Activated B cell treated with CpG ODN at 0.5 μM for 24 hours (primary cell): ENCODE measurements at regions of chr14 and their contacts with region 1.

Region 1: DNA sequence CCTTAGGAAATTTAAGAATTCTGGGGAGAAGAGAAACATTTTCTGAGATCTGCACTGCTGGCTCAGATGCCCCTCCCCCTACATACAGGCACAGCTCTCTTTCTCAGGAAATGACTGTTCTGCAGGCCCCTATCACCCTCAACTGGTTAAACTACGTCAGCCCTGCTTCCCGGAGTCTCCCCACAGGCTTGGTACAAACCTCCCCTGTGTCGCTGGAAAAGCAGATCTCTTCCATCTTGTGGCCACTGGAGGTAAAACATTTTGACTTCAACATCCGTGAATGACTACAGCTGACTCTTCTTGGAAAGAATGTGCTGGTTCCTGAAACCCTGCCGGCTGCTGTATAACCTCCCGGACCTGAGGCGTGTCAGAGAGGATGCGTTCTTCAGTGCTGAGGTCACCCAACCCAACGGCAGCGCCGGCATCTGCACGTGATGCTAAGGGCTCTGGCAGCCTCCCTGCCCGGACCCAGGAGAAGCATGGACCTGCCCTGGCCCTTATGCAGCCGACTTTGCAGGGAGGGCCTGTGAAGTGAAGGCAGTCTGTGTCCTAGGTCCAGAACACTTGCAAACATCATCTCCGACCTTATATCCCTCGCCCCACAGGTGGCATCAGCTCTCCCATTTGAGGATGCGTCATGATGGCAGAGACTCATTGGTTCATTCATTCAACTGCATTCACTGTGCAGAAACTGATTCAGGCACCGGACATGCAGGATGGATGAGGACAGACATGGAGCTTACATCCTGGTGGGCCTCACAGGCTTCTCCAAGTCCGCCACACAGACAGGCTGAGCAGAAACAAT is 129.3 kb downstream of the GCH1 start:
- DNase-seq: no peak
- ATAC-seq: peak; percentile 32
- H3K4me3 Mint-ChIP-seq: peak overlapping the region; percentile 32
- H3K27ac Mint-ChIP-seq: peak overlapping the region; percentile 62
- H3K4me1 Mint-ChIP-seq: peaks cover 50% of the 10 kb centered on the region
- H3K27me3 Mint-ChIP-seq: no peaks in the 10 kb centered on the region
- CTCF ChIP-seq: no peak

Region 2: DNA sequence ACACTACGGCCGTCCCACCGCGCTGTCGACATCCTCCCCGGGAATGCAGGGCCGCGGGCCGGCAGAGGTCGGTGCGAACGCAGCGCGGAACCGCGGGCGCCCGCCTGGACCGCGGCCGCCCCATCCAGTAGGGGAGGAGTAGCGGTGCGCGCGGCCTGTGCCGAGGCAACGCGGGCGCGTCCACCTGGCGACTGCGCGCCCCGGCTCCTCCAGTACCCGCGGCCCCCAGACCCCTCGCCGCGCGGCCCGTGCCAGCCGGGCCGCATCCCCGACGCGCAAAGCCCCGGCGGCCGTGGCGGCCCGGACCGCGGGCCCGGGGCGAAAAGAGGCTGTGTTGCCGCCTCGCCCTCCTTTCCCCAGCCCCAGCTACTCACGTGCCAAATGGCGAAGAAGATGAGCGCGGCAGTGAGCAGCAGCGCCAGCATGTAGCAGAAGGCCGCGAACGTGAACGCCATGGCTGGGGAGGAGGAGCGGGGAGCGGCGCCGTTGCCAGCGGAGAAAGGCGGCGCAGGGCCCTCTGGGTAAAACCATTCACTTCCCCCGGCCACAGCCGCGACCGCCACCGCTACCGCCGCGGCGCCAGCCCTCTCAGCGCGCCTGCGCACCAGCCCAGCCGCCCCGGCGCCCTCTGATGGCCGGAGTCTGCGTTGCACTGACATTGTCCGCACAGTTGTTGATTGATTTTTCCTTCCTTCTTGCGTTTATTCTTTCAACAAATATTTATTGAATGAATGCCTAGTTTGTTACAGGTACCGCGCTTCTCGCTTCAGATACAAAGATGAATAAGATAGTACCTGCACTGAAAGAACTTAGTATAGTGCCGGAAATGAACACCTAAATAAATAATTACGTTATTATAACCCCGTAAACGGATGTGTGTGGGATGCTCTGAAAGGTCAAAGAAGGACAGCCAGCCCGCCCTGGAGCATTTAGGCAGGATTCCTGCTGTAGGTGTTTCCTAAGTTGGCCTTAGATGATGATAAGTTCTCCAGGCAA is 332.2 kb before region 1 on chr14 and contains the start of gene CNIH1:
- CTCF ChIA-PET with region 1: no interaction called
- POLR2A ChIA-PET with region 1: no interaction called
- intact Hi-C with region 1: loop called (anchors 5 kb)
- DNase-seq: peak; percentile 98
- ATAC-seq: peak; percentile 95
- H3K4me3 Mint-ChIP-seq: peak within 1 kb of the TSS; percentile 86
- H3K27ac Mint-ChIP-seq: peak within 1 kb of the TSS; percentile 88
- H3K4me1 Mint-ChIP-seq: peaks cover 50% of the 10 kb centered on the region
- H3K27me3 Mint-ChIP-seq: peaks cover 3% of the 10 kb centered on the region
- CTCF ChIP-seq: peak; percentile 40
- total RNA-seq, gene CNIH1: 40.6 and 43.5 TPM in 2 replicates

Region 3: DNA sequence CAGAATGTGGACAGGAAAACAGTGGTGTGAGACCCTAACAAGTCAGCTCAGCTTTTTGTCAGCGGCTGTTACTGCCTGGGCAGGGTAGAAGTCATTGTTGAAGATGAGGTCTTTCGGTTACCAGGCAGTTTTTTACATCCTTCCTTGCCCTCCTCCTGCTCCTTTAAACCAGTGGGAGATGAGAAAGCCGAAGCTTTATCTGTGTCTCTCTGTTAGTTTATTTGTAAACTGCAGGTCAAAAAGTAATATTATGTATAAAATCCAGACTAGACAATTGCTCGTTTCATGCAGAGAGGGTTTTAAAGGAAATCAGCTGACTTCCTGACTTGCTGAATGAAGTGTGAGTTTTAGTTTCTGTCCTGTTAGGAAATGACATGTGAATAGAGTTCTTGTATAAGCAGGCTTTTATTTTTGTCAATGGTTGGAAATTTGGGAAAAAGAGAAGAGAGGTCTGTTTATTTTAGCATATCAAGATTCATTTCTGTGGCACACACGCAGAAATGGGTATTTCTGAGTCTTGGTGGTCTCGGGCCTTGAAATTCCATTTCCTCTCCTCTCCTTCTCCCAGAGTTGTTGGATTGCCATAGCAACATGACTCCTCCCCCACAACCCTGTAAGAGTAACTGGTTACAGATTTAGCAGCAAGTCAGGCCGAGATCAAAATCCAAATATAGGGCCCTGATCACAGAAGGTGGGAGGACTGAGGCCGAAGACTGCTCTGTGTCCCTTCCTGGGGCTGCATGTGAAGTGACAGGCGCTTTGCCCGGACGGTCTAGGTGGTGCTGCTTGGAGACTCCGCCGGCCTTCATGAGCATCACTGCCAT is 145.6 kb before region 1 on chr14:
- CTCF ChIA-PET with region 1: no interaction called
- POLR2A ChIA-PET with region 1: interaction called, 3 read pairs
- intact Hi-C with region 1: loop called (anchors 5 kb)
- DNase-seq: no peak
- ATAC-seq: peak; percentile 69
- H3K4me3 Mint-ChIP-seq: peak overlapping the region; percentile 79
- H3K27ac Mint-ChIP-seq: peak overlapping the region; percentile 91
- H3K4me1 Mint-ChIP-seq: peaks cover 51% of the 10 kb centered on the region
- H3K27me3 Mint-ChIP-seq: no peaks in the 10 kb centered on the region
- CTCF ChIP-seq: no peak

Region 4: GRCh38 chr14:54698966-54699530 is 74.3 kb before region 1 on chr14:
- CTCF ChIA-PET with region 1: no interaction called
- POLR2A ChIA-PET with region 1: no interaction called
- intact Hi-C with region 1: no loop called
- DNase-seq: no peak
- ATAC-seq: no peak
- H3K4me3 Mint-ChIP-seq: no peak overlapping the region
- H3K27ac Mint-ChIP-seq: no peak overlapping the region
- H3K4me1 Mint-ChIP-seq: no peaks in the 10 kb centered on the region
- H3K27me3 Mint-ChIP-seq: no peaks in the 10 kb centered on the region
- CTCF ChIP-seq: no peak

Region 5: DNA sequence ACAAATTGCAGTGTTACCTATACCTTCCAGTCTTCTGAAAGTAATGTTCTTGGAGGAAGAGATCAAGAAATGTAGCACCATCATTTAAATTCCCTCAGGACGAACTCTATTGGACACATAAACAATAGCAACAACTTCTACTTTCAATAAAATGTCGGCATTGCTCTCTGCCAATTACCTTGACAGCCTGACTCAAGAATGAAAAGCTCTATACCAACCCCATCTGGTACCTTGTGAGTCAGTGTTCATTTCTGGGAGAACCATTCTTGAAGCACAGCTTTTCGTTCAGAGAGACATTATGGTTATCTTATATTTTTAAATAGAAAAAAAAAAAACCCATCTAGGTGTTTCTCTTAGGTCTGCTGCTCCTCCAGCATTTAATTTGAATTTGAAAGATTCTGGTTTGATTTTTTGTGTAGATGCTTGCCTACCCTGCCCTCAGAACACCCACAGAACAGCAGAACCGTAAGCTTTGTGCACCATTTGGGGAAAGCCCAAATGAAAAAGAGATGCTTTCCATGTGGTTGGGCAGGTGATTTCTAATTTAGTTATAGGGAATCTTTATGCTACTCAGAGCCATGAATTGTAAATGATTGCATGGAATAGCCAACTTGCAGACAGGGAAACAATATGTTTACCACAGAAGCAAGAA is 50.5 kb before region 1 on chr14:
- CTCF ChIA-PET with region 1: interaction called, 11 read pairs
- POLR2A ChIA-PET with region 1: no interaction called
- intact Hi-C with region 1: no loop called
- DNase-seq: no peak
- ATAC-seq: peak; percentile 70
- H3K4me3 Mint-ChIP-seq: no peak overlapping the region
- H3K27ac Mint-ChIP-seq: no peak overlapping the region
- H3K4me1 Mint-ChIP-seq: peaks cover 6% of the 10 kb centered on the region
- H3K27me3 Mint-ChIP-seq: no peaks in the 10 kb centered on the region
- CTCF ChIP-seq: no peak

Region 6: GRCh38 chr14:54754116-54754622 is 19.2 kb before region 1 on chr14:
- CTCF ChIA-PET with region 1: no interaction called
- POLR2A ChIA-PET with region 1: no interaction called
- intact Hi-C with region 1: no loop called
- DNase-seq: no peak
- ATAC-seq: no peak
- H3K4me3 Mint-ChIP-seq: no peak overlapping the region
- H3K27ac Mint-ChIP-seq: no peak overlapping the region
- H3K4me1 Mint-ChIP-seq: no peaks in the 10 kb centered on the region
- H3K27me3 Mint-ChIP-seq: no peaks in the 10 kb centered on the region
- CTCF ChIP-seq: no peak

Region 7: GRCh38 chr14:54805521-54806322 is 32.3 kb after region 1 on chr14:
- CTCF ChIA-PET with region 1: interaction called, 9 read pairs
- POLR2A ChIA-PET with region 1: no interaction called
- intact Hi-C with region 1: loop called (anchors 1 kb)
- DNase-seq: peak; percentile 62
- ATAC-seq: peak; percentile 88
- H3K4me3 Mint-ChIP-seq: no peak overlapping the region
- H3K27ac Mint-ChIP-seq: no peak overlapping the region
- H3K4me1 Mint-ChIP-seq: peaks cover 6% of the 10 kb centered on the region
- H3K27me3 Mint-ChIP-seq: peaks cover 13% of the 10 kb centered on the region
- CTCF ChIP-seq: peak; percentile 90